Common myeloid progenitor, CD34-positive (primary cell): ENCODE measurements at regions of chr7 and their contacts with region 1.

Region 1: GRCh38 chr7:104923010-104923421 is 91.0 kb upstream of the KMT2E start:
- DNase-seq: peak; percentile 89 to 92 (median 90)
- H3K4me3 ChIP-seq: no peak overlapping the region
- H3K27ac ChIP-seq: no peak overlapping the region
- H3K4me1 ChIP-seq: peaks cover 0 to 6% (median 1%) of the 10 kb centered on the region in 4 experiments
- H3K27me3 ChIP-seq: no peaks in the 10 kb centered on the region

Region 2: GRCh38 chr7:104231054-104232046 is 691.7 kb before region 1 on chr7:
- CTCF ChIA-PET with region 1: interaction called, 10 read pairs
- POLR2A ChIA-PET with region 1: no interaction called
- DNase-seq: peak; percentile 36 to 61 (median 53)
- H3K4me3 ChIP-seq: no peak overlapping the region
- H3K27ac ChIP-seq: no peak overlapping the region
- H3K4me1 ChIP-seq: no peaks in the 10 kb centered on the region
- H3K27me3 ChIP-seq: peaks cover 0 to 15% (median 5%) of the 10 kb centered on the region in 5 experiments

Region 3: GRCh38 chr7:104643587-104644217 is 279.3 kb before region 1 on chr7:
- CTCF ChIA-PET with region 1: interaction called, 32 read pairs
- POLR2A ChIA-PET with region 1: no interaction called
- DNase-seq: peak; percentile 20 to 50 (median 42)
- H3K4me3 ChIP-seq: no peak overlapping the region
- H3K27ac ChIP-seq: no peak overlapping the region
- H3K4me1 ChIP-seq: no peaks in the 10 kb centered on the region
- H3K27me3 ChIP-seq: peaks cover 0 to 4% (median 0%) of the 10 kb centered on the region in 5 experiments

Region 4: GRCh38 chr7:104848138-104848990 is 74.7 kb before region 1 on chr7:
- CTCF ChIA-PET with region 1: interaction called, 19 read pairs
- POLR2A ChIA-PET with region 1: no interaction called
- DNase-seq: peak; percentile 36 to 58 (median 41)
- H3K4me3 ChIP-seq: no peak overlapping the region
- H3K27ac ChIP-seq: no peak overlapping the region
- H3K4me1 ChIP-seq: no peaks in the 10 kb centered on the region
- H3K27me3 ChIP-seq: peaks cover 0 to 9% (median 3%) of the 10 kb centered on the region in 5 experiments

Region 5: DNA sequence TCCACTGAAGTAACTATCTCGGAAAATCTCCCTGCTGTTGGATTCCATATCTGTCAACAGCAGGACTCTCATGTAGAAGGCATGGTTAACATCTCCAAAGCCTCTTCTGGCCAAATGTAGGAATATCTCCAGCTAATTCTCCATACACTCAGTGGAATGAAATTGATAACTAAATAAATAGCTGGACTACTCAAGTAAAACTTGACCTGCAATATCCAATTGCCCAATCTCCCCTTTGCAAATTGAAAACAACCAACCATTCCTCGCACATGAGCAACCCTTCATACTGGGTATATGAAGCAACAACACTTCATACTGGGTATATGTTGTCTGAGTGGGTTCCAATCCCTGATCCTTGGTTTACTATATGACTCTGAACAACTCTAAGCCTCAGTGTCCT is 14.4 kb before region 1 on chr7:
- CTCF ChIA-PET with region 1: interaction called, 54 read pairs
- POLR2A ChIA-PET with region 1: interaction called, 3 read pairs
- DNase-seq: no peak
- H3K4me3 ChIP-seq: no peak overlapping the region
- H3K27ac ChIP-seq: no peak overlapping the region
- H3K4me1 ChIP-seq: no peaks in the 10 kb centered on the region
- H3K27me3 ChIP-seq: peaks cover 0 to 2% (median 0%) of the 10 kb centered on the region in 5 experiments

Region 6: DNA sequence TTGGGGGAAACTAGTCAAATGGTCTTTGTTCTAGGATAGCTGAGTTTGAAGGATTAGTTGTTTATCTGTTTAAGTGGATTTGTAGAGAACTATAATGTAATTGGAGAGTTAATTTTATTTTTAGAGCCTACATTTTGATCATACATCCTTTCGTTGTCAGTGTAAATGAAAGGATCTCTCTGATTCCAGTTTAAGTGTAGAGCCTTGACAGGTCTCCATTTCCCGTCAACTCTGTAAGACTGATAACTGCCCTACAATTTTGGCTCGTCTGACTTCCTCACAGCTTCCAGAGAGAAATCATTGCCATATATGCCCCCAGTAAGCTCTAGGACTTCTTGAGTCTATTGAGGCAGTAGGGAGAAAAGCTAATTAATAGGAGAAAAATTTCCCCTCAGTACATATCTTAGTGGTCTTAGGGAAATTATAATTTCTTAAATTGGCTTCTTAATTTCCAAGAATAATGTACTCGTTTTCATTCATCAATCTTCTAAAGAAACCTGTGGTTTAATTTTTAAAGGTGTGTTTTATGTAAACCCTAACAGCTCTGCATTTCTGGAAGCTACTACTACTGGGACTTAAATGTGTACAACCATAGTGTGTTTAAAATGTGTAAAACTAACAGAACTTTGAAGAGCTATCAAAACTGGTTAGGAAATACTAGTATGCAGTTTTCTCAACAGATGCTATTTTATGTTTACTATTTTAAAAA is 94.8 kb after region 1 on chr7:
- CTCF ChIA-PET with region 1: no interaction called
- POLR2A ChIA-PET with region 1: no interaction called
- DNase-seq: no peak
- H3K4me3 ChIP-seq: peak overlapping the region in 6 of 7 experiments; percentile 73 to 100 (median 98)
- H3K27ac ChIP-seq: peak overlapping the region in 1 of 2 experiments; percentile 46
- H3K4me1 ChIP-seq: peaks cover 18 to 60% (median 53%) of the 10 kb centered on the region in 4 experiments
- H3K27me3 ChIP-seq: no peaks in the 10 kb centered on the region